BJ (cell line): ENCODE measurements at regions of chr11 and their contacts with region 1.

Region 1: DNA sequence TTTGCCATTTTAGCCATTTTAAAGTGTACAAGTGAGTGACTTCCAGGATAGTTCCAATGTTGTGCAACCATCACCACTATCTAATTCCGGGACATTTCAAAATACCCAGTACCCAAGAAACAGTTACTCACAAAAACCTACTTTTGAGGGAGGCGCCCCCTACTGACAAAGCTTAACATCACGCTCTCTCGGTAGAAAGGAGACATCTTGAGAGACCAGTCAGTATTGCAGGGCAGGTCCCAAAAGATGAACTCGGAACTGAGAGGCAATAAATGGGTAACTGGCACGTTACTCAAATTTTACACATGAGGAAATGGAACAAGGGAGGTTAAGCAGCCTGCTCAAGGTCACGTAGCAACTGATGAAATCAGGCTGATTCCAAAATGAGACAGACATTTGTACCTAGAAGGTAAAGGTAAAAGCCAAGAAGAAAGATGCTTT is 50.0 kb upstream of the POU2AF1 start:
- DNase-seq: no peak
- H3K4me3 ChIP-seq: no peak overlapping the region
- H3K27me3 ChIP-seq: peaks cover 3% of the 10 kb centered on the region
- CTCF ChIP-seq: peak; percentile 72

Region 2: DNA sequence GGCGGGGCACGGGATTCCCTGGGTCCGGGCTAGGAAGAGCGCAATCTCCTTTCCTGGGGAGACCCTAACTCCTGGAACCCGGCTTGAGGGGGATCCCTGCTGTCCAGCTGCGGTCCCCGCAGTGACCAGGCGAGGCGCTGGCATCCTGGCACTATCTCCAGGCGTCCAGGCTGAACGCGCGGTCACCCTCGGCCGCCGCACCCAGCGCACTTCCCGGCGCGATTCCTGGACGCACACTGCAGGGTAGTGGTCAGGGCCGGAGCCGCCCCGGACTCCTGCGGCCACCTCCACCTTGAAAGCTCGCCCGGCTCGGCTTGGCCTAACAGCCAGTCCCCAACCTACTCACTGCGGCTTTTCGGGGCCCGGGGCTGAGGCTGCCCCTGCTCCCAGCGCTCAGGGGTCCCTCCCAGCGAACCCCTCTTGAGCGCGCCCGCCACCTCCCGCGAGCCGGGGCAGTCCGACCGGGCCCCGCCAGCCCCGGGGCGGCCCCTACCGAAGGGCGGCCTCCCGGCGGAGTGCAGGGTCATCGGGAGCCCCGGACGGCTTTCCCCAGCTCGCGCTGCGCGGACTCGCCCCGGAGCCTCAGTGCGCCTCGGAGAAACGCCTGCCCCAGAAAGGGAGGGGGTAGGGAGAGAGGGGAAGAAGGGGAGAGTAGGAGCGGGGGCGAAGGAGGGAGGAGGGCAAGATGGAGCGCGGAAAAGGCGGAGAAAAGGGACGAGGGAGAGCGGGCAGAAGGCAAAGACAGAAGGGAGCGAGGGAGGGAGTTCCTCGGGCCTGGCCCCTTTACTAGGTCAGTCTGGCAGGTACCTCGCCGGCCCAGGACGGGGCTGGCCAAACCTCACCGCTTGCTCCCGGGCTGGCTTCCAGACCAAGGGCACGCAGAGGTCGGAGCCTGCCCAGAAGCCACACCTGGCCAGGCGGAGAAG is 129.7 kb before region 1 on chr11:
- CTCF ChIA-PET with region 1: interaction called, 20 read pairs
- POLR2A ChIA-PET with region 1: no interaction called
- DNase-seq: no peak
- H3K4me3 ChIP-seq: peak overlapping the region; percentile 45
- H3K27me3 ChIP-seq: peaks cover 35% of the 10 kb centered on the region
- CTCF ChIP-seq: peak; percentile 62

Region 3: DNA sequence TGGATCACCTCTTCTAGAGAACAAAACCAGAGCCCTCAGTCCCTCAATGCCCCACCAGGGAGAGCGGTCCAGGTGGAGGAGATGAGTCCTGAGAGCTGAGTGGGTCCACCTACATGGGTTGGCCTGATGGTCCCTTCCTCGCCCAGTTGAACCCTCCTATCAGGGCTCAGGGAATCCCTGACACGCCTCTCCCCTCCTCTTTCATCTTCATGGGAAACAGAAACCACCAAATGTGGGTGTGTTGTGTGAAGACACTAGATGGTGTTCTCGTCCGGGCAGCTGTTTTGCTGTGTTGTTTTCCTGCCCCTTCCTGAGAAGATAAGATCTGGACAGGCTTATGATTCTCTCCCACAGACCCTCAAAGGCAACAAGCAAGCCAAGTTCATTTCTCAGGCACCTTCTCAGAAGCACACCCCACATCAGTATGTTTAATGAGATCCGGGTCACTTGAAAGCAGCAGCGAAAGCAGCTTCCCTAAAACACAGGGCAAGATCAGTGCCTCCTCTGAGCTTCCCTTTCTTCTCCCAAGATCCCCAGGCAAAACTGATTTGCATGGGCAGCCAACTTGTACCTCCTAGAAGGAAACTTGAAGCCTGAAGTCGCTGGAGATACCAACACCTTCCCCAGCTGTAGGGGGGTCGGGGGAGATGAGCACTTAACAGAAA is 14.7 kb before region 1 on chr11:
- CTCF ChIA-PET with region 1: interaction called, 30 read pairs
- POLR2A ChIA-PET with region 1: no interaction called
- DNase-seq: no peak
- H3K4me3 ChIP-seq: no peak overlapping the region
- H3K27me3 ChIP-seq: peaks cover 9% of the 10 kb centered on the region
- CTCF ChIP-seq: no peak

Region 4: GRCh38 chr11:111441443-111441842 is 12.4 kb after region 1 on chr11:
- CTCF ChIA-PET with region 1: interaction called, 54 read pairs
- POLR2A ChIA-PET with region 1: no interaction called
- DNase-seq: peak; percentile 97
- H3K4me3 ChIP-seq: no peak overlapping the region
- H3K27me3 ChIP-seq: no peaks in the 10 kb centered on the region
- CTCF ChIP-seq: no peak